ENCODE measurements at regions of chr22 and their contacts with region 1.

Region 1: GRCh38 chr22:40177738-40178416 is at the start of gene TNRC6B:
- DNase-seq: peak; percentile 31 to 94 (median 73)
- ATAC-seq: peak; percentile 84 to 92 (median 90)
- H3K4me3 ChIP-seq: peak within 1 kb of the TSS; percentile 59 to 82
- H3K4me3 Mint-ChIP-seq: peak within 1 kb of the TSS; percentile 76 to 92 (median 86)
- H3K27ac ChIP-seq: peak within 1 kb of the TSS; percentile 57
- H3K27ac Mint-ChIP-seq: peak within 1 kb of the TSS; percentile 91
- H3K4me1 ChIP-seq: peaks cover 41 to 42% of the 10 kb centered on the region in 2 experiments
- H3K4me1 Mint-ChIP-seq: peaks cover 60 to 67% (median 67%) of the 10 kb centered on the region in 3 donors
- H3K27me3 ChIP-seq: no peaks in the 10 kb centered on the region
- H3K27me3 Mint-ChIP-seq: no peaks in the 10 kb centered on the region
- total RNA-seq, gene TNRC6B: 122 to 173 (median 143) TPM

Region 2: GRCh38 chr22:38824585-38824984 is 1353.3 kb before region 1 on chr22:
- CTCF ChIA-PET with region 1: no interaction called
- POLR2A ChIA-PET with region 1: no interaction called
- DNase-seq: peak in 27 of 35 experiments; percentile 4 to 65 (median 29)
- ATAC-seq: peak in 3 of 4 experiments; percentile 52 to 57 (median 57)
- H3K4me3 ChIP-seq: no peak overlapping the region
- H3K4me3 Mint-ChIP-seq: no peak overlapping the region
- H3K27ac ChIP-seq: no peak overlapping the region
- H3K27ac Mint-ChIP-seq: no peak overlapping the region
- H3K4me1 ChIP-seq: no peaks in the 10 kb centered on the region
- H3K4me1 Mint-ChIP-seq: no peaks in the 10 kb centered on the region
- H3K27me3 ChIP-seq: peaks cover 0 to 10% of the 10 kb centered on the region in 2 experiments
- H3K27me3 Mint-ChIP-seq: no peaks in the 10 kb centered on the region

Region 3: DNA sequence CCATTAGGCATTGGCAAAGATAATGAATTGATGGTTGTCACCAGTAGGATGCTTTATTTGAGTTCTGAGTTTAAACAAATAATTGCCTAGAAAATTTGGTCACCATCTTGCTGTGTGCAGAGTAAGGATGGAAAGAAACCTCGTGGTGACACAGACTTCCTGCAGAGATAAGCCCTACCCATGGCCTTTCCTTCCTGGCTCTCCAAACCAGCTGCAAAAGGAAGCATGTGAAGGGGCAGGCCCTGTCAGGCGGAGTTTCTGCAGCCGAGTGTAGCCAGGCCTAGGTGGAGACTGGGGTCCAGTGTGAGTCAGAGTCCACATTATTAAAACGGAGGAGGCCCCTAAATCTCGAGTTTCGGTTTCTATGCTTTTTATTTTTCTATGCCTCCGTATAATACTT is 85.3 kb after region 1 on chr22:
- CTCF ChIA-PET with region 1: no interaction called
- POLR2A ChIA-PET with region 1: no interaction called
- DNase-seq: peak in 2 of 35 experiments; percentile 6 to 31
- ATAC-seq: peak in 2 of 4 experiments; percentile 37 to 50
- H3K4me3 ChIP-seq: no peak overlapping the region
- H3K4me3 Mint-ChIP-seq: no peak overlapping the region
- H3K27ac ChIP-seq: peak overlapping the region; percentile 46
- H3K27ac Mint-ChIP-seq: peak overlapping the region; percentile 82 to 84
- H3K4me1 ChIP-seq: peaks cover 16 to 40% of the 10 kb centered on the region in 2 experiments
- H3K4me1 Mint-ChIP-seq: peaks cover 66 to 73% (median 70%) of the 10 kb centered on the region in 3 donors
- H3K27me3 ChIP-seq: no peaks in the 10 kb centered on the region
- H3K27me3 Mint-ChIP-seq: no peaks in the 10 kb centered on the region

Region 4: DNA sequence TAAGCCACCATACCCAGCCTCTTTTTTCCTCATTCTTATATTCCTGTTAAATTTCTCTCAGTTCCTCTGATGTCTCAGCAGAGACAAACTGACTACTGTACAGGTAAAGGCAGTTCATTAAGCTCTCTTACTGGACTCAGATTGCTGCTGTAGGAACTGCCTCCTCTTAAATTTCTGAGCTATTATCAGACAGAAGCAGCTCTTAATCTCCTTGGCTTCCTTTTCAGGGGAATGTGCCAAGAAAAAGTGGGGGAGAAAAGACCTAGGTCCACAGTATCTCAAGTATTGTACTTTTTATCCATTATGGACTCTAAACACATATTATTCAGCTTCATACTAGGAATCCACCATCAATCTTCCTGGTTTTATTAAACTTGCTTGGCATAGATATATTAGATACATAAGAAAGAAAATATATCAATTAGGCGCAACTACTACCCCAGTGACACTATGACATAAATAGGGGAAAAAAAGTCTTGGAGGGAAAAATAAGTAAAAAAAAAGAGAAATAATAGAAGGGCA is 432.5 kb after region 1 on chr22:
- CTCF ChIA-PET with region 1: no interaction called
- POLR2A ChIA-PET with region 1: interaction called in 1 of 2 experiments, 11 read pairs
- DNase-seq: no peak
- ATAC-seq: no peak
- H3K4me3 ChIP-seq: no peak overlapping the region
- H3K4me3 Mint-ChIP-seq: no peak overlapping the region
- H3K27ac ChIP-seq: no peak overlapping the region
- H3K27ac Mint-ChIP-seq: no peak overlapping the region
- H3K4me1 ChIP-seq: peaks cover 5 to 7% of the 10 kb centered on the region in 2 experiments
- H3K4me1 Mint-ChIP-seq: peaks cover 59 to 60% (median 60%) of the 10 kb centered on the region in 3 donors
- H3K27me3 ChIP-seq: no peaks in the 10 kb centered on the region
- H3K27me3 Mint-ChIP-seq: no peaks in the 10 kb centered on the region

Measured in T-cell (primary cell).